ENCODE measurements at regions of chr5 and their contacts with region 1.

Region 1: DNA sequence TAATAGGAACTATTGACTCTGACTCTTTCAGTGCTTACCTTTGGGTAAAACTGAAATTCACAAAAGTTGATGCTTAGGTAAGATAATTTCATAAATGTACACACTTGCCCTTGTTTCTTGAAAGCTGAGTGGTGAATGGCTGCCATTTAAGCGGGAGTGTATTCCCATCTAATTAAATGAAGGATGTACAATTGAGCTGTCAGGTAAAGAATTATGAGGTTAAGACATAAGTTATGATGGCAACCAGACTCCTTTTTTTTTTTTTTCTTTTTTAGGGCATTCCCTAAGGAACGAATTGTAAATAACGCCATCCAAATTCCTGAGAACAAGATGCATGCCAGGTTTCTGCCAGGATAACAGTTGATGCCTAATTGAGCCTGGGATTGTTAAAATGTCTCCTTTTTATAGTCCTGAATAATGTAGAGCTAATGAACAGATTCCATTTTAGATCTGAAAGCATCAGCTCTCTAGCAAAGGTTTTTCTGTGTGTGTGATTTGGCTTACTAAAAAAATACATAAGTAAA is 199.7 kb downstream of the ISL1 start:
- DNase-seq: no peak
- H3K4me3 Mint-ChIP-seq: no peak overlapping the region
- H3K27ac Mint-ChIP-seq: no peak overlapping the region
- H3K4me1 Mint-ChIP-seq: no peaks in the 10 kb centered on the region
- H3K27me3 Mint-ChIP-seq: no peaks in the 10 kb centered on the region

Region 2: GRCh38 chr5:53392073-53392472 is 1809.1 kb after region 1 on chr5:
- intact Hi-C with region 1: loop called (anchors 5 kb)
- DNase-seq: no peak
- H3K4me3 Mint-ChIP-seq: no peak overlapping the region
- H3K27ac Mint-ChIP-seq: no peak overlapping the region
- H3K4me1 Mint-ChIP-seq: no peaks in the 10 kb centered on the region
- H3K27me3 Mint-ChIP-seq: peaks cover 2% of the 10 kb centered on the region